ENCODE measurements at regions of chr18 and their contacts with region 1.

Region 1: DNA sequence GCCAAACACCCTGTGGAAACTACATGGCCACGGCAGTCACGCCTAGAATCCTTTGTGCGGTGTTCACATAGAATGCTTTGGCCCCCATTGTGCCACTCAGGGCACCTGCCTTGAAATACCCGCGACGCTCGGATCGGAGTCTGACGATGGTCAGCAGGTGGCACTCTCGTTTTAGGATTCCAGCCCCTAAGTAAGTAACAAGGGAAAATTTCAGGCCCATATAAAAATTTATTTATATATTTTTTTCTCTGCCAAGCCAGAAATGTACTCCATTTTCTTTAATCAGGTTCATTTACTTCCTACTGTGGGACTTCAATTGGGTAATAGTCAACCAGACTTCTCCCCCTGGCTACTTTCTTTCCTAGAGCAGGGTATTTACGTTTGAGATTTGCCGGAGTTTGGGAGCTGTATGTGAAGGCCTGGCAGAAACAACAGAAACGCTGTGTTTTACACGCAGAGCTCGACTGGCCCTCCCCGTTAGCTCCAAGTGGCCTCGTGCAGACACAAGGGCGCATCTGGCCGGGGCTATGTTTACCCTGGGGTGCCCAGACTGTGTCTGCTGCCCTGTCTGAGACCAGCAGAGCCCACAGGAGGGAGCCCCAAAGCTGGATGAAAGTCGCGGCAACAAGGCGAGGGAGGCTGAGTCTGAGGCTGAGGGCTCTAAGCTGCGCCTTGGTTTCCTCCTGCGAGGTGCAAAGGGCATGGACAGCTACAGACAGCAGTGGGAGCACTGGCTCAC is 41.6 kb downstream of the LRRC30 start:
- DNase-seq: peak; percentile 59
- H3K4me3 ChIP-seq: peak overlapping the region; percentile 46
- H3K27ac ChIP-seq: peak overlapping the region; percentile 84
- H3K4me1 ChIP-seq: peaks cover 23% of the 10 kb centered on the region
- H3K27me3 ChIP-seq: no peaks in the 10 kb centered on the region
- CTCF ChIP-seq: peak; percentile 65

Region 2: DNA sequence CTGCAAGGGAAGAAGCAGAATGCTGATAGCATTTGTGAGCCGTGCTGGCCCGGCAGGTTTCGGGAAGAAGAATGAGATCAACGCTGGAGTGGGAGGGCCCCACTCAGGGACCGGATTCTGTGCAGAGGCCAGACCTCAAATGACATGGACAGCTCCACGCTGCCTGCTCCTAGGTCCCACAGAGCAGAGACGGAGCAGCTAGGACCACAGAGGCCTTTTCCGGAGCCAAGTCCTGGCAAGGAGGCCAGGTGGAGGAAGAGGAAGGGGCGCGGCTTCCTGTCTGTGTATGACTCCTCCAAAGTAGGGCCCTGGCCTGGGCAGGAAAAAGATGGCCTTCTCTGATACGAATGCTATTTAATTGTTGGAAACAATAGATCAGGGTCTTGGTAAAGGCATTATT is 98.3 kb after region 1 on chr18:
- intact Hi-C with region 1: loop called (anchors 10 kb)
- DNase-seq: peak; percentile 69
- H3K4me3 ChIP-seq: no peak overlapping the region
- H3K27ac ChIP-seq: peak overlapping the region; percentile 92
- H3K4me1 ChIP-seq: peaks cover 63% of the 10 kb centered on the region
- H3K27me3 ChIP-seq: no peaks in the 10 kb centered on the region
- CTCF ChIP-seq: no peak

Region 3: DNA sequence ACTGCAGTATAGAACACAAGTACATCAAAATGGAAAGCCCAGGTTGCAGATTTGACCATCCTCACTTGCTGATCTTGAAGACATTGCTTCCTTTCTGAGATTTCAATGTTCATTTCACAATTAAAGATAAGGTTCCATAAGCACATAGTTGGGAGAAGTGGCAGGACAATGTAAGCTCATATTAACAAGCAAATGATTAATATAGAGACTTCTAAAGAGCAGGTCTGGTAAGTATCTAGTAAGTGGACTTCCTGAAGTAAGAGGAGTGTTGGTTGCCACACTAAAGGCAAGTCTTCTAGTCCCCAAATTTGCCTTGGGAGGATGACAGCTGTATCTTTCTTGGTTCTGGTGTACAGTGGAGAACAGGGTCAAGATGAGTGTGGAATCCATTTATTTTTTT is 293.2 kb after region 1 on chr18:
- intact Hi-C with region 1: loop called (anchors 2 kb)
- DNase-seq: no peak
- H3K4me3 ChIP-seq: peak overlapping the region; percentile 84
- H3K27ac ChIP-seq: peak overlapping the region; percentile 100
- H3K4me1 ChIP-seq: peaks cover 82% of the 10 kb centered on the region
- H3K27me3 ChIP-seq: no peaks in the 10 kb centered on the region
- CTCF ChIP-seq: no peak

Region 4: DNA sequence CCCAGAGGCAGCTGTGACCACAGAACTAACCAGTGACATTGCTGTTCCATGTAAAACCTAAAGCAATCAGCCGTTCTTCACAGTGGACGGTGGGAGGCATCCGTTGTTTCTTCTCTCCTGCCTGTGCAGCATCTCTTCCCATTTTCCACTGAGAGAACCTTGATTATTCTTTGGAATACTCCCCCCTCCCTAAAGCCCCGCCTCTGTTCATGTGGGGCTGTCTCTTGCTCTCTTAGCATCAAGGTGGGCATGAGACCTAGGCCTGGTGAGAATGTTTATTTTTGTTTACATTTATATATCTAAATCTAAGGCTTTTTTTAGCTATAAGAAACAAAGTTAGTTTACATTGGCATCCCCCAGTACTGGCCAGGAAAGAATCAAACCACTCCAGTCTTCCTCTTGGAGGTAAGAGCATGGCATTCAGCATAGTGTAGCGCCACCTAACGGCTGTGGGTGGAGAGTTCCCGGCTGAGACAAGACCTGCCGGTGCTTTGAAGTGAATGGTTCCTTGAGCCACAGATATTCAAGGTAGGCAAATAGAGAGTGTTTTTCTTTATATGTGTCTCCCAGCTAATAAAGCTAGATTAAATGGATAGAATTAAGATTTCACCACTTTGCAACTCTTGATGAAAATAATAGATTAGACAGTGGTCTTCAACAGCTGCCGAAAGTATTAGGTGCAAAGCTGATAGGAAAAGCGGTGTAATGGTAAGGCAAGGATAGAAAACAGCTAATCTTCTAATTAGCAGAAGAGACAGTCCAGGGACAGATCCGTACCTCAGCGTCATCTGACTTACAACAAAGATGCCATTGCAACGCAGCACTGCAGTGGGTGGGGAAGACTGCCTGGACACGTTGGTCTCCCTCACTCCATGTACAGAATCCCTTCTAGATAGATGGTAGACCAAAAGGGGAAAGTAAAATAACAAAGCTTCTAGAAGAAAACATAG is 1117.2 kb after region 1 on chr18:
- intact Hi-C with region 1: loop called (anchors 10 kb)
- DNase-seq: peak; percentile 45
- H3K4me3 ChIP-seq: no peak overlapping the region
- H3K27ac ChIP-seq: no peak overlapping the region
- H3K4me1 ChIP-seq: peaks cover 9% of the 10 kb centered on the region
- H3K27me3 ChIP-seq: no peaks in the 10 kb centered on the region
- CTCF ChIP-seq: peak; percentile 79